ENCODE measurements at regions of chr19 and their contacts with region 1.

Region 1: DNA sequence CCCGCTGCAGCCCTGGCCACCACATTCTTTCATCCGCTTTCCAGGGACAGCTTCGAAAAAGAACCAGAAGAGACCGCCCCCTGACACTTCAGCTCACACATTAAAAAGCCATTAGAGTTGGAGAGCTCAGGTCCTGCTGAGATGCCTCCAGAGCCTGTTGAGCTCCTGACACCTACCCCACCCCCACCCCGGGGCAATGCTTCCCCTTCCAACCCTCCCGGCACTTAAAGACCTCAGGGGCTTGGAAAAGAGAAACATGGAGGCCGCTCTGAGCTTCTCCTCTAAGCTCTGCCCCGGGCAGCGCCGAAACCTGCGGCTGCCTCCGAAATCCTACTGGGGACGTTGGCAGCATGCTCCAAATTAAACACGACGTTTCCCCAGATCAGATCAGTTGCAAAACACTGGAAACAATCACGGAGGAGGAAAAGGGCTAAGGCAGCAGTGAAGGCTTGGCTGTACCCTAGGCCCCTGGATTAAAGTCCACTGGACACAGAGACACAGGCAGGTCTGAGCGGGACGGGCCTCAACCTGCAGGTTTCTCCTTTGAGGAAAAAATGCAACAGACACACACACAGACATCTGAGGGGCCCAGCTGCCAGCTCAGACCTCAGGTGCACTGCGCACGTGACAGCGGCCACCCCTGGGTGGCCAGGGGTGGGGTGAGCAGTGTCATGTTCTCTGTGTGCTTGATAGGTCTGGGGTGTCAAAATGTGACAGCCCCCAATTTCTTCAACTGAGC is 9.6 kb downstream of the SH3GL1 start:
- DNase-seq: no peak
- CTCF ChIP-seq: no peak

Region 2: GRCh38 chr19:4375164-4376027 is 15.3 kb before region 1 on chr19:
- CTCF ChIA-PET with region 1: interaction called, 10 read pairs
- POLR2A ChIA-PET with region 1: interaction called, 10 read pairs
- DNase-seq: peak; percentile 59
- CTCF ChIP-seq: peak; percentile 35

Region 3: GRCh38 chr19:4425537-4425936 is 34.8 kb after region 1 on chr19:
- CTCF ChIA-PET with region 1: no interaction called
- POLR2A ChIA-PET with region 1: no interaction called
- DNase-seq: no peak
- CTCF ChIP-seq: no peak

Measured in GM10248 (cell line).